OCI-LY7 (cell line): ENCODE measurements at regions of chr12 and their contacts with region 1.

Region 1: GRCh38 chr12:128069359-128069997 is 197.5 kb upstream of the TMEM132C start:
- DNase-seq: peak; percentile 60
- H3K4me3 ChIP-seq: no peak overlapping the region
- H3K27ac ChIP-seq: no peak overlapping the region
- H3K4me1 ChIP-seq: no peaks in the 10 kb centered on the region
- CTCF ChIP-seq: peak; percentile 94

Region 2: DNA sequence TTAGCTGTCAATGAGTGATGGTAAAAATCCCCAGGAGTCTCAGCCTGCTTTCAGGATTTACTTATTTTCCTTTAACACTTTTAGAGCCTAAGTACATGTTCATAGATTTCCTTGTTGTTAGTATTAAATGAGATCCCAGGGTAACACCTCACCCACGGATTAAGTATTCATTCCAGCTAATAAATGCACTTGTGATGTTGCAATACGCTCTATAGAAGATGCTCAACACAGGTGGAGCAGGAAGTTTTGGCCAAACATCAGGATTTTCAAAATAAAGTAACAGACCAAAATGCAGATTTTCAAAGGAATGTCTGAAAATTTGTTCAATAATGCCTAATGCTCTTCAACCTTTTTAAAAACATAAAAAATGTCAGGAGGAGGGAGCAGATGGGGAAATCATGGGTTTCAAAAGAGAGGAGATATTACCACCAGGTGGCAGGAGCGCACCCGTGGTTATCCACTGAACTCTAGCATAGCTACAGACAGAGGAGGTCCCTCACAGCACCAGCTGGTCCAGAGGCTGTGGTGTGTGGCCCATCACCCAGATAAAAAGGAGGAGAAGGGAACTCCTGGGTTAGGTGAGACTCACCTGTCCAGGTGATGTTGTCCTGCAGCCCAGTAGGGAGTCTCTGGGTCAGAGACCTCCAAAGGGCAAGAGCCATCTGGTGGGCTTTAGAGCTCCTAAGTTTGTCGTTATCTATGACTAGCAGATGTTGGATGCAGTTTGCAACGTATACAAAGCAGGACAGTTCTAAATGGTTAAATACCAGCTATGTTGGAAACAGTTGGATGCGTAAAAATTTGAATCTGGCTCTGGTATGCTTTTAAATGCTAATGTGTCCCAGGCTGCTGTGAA is 960.9 kb before region 1 on chr12:
- CTCF ChIA-PET with region 1: no interaction called
- POLR2A ChIA-PET with region 1: no interaction called
- intact Hi-C with region 1: loop called (anchors 5 kb)
- DNase-seq: peak; percentile 31
- H3K4me3 ChIP-seq: no peak overlapping the region
- H3K27ac ChIP-seq: no peak overlapping the region
- H3K4me1 ChIP-seq: no peaks in the 10 kb centered on the region
- CTCF ChIP-seq: peak; percentile 81

Region 3: DNA sequence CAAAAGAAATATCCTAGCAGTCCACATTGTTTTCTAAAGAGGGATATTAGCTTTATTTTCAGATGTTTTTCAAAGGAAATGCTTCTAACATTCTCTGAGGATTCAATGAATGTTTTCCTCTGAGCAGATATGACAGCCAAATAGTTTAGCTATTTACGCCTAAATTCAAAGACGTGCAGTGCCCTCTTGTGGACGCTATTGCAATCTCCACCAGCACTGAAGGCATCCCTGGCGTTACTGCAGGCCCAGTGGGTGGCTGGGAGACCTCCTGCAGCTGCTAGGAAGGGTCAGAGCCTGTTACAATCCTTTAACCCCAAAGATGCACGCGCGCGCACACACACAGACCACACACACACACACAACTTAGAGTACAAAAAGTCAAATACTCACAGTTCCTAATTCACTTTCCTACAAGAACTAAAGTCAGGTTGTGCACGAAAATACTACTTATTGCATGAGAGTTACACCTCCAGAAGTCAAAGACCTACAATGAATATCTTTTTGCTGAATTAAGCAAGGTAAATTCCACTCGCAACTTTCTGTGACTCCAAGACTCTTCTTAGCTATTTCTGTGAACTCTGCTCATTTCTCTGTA is 391.8 kb before region 1 on chr12:
- CTCF ChIA-PET with region 1: no interaction called
- POLR2A ChIA-PET with region 1: no interaction called
- intact Hi-C with region 1: loop called (anchors 5 kb)
- DNase-seq: peak; percentile 57
- H3K4me3 ChIP-seq: no peak overlapping the region
- H3K27ac ChIP-seq: no peak overlapping the region
- H3K4me1 ChIP-seq: no peaks in the 10 kb centered on the region
- CTCF ChIP-seq: peak; percentile 86

Region 4: DNA sequence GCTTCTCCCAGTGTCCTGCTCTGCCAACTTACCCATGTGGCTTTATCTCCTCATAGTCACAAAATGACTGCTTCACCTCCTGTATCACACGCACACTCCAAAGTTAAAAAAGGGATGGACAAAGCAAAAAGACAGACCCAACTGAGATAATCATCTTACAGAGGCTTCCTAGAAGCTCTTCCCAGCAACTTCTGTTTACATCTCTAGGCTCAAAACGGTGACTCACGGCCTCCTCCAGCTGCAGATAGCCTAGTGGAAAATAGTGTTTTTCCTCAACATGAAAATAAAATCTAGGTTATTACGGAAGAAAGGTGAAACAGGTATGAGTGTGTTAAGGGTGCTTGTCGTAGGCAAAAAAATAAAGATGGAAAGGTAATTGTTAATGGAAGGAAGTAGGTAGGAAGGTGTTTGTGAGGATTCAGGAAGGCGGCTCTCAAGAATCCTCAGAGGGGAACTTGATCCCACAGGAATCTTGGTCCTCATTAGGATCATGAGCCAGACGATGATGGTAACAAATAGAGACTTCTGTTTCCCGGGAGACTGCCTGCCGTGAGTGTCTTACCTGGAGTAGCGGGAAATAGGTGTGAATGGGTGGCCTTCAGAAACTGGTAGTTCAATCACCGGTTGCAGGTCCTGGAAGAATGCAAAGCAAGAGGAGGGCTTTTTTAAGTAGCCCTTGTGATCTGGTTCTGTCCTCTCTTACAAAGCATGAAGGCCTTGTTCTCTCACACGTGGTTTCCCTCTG is 290.0 kb before region 1 on chr12:
- CTCF ChIA-PET with region 1: no interaction called
- POLR2A ChIA-PET with region 1: no interaction called
- intact Hi-C with region 1: loop called (anchors 5 kb)
- DNase-seq: no peak
- H3K4me3 ChIP-seq: no peak overlapping the region
- H3K27ac ChIP-seq: no peak overlapping the region
- H3K4me1 ChIP-seq: no peaks in the 10 kb centered on the region
- CTCF ChIP-seq: no peak